ENCODE measurements at regions of chr9 and their contacts with region 1.

Region 1: GRCh38 chr9:97615439-97616072 is 17.6 kb downstream of the TSTD2 start:
- DNase-seq: no peak
- ATAC-seq: peak; percentile 73
- H3K4me3 ChIP-seq: no peak overlapping the region
- H3K27ac ChIP-seq: no peak overlapping the region
- H3K4me1 ChIP-seq: peaks cover 10% of the 10 kb centered on the region; the same call in 1 of the 2 replicates
- H3K27me3 ChIP-seq: no peaks in the 10 kb centered on the region
- CTCF ChIP-seq: peak; percentile 63 to 84 (median 80)
- EP300 ChIP-seq: no peak
- POLR2A ChIP-seq: no peak
- RAD21 ChIP-seq: peak; percentile 86

Region 2: GRCh38 chr9:97307091-97307490 is 308.5 kb before region 1 on chr9:
- CTCF ChIA-PET with region 1: no interaction called
- POLR2A ChIA-PET with region 1: no interaction called
- RAD21 ChIA-PET with region 1: no interaction called
- SMC1A ChIA-PET with region 1: no interaction called
- in situ Hi-C with region 1: no loop called
- intact Hi-C with region 1: no loop called
- DNase-seq: no peak
- ATAC-seq: no peak
- H3K4me3 ChIP-seq: no peak overlapping the region
- H3K27ac ChIP-seq: no peak overlapping the region
- H3K4me1 ChIP-seq: no peaks in the 10 kb centered on the region
- H3K27me3 ChIP-seq: no peaks in the 10 kb centered on the region; a peak in 1 of 4 replicates
- CTCF ChIP-seq: no peak
- EP300 ChIP-seq: no peak
- POLR2A ChIP-seq: no peak
- RAD21 ChIP-seq: no peak

Region 3: GRCh38 chr9:97398999-97399758 is 216.4 kb before region 1 on chr9:
- CTCF ChIA-PET with region 1: interaction called, 11 read pairs
- POLR2A ChIA-PET with region 1: no interaction called
- RAD21 ChIA-PET with region 1: interaction called, 3 read pairs
- SMC1A ChIA-PET with region 1: interaction called, 9 read pairs
- in situ Hi-C with region 1: no loop called
- intact Hi-C with region 1: no loop called
- DNase-seq: no peak
- ATAC-seq: peak; percentile 81
- H3K4me3 ChIP-seq: no peak overlapping the region
- H3K27ac ChIP-seq: no peak overlapping the region
- H3K4me1 ChIP-seq: peaks cover 6% of the 10 kb centered on the region
- H3K27me3 ChIP-seq: no peaks in the 10 kb centered on the region
- CTCF ChIP-seq: peak; percentile 86 to 100 (median 99)
- EP300 ChIP-seq: no peak
- POLR2A ChIP-seq: no peak
- RAD21 ChIP-seq: peak; percentile 82

Region 4: GRCh38 chr9:97440160-97440559 is 175.4 kb before region 1 on chr9:
- CTCF ChIA-PET with region 1: interaction called, 17 read pairs
- POLR2A ChIA-PET with region 1: no interaction called
- RAD21 ChIA-PET with region 1: interaction called, 3 read pairs
- SMC1A ChIA-PET with region 1: interaction called, 4 read pairs
- in situ Hi-C with region 1: no loop called
- intact Hi-C with region 1: no loop called
- DNase-seq: no peak
- ATAC-seq: no peak
- H3K4me3 ChIP-seq: no peak overlapping the region
- H3K27ac ChIP-seq: no peak overlapping the region
- H3K4me1 ChIP-seq: no peaks in the 10 kb centered on the region
- H3K27me3 ChIP-seq: no peaks in the 10 kb centered on the region
- CTCF ChIP-seq: no peak
- EP300 ChIP-seq: no peak
- POLR2A ChIP-seq: no peak
- RAD21 ChIP-seq: no peak

Region 5: DNA sequence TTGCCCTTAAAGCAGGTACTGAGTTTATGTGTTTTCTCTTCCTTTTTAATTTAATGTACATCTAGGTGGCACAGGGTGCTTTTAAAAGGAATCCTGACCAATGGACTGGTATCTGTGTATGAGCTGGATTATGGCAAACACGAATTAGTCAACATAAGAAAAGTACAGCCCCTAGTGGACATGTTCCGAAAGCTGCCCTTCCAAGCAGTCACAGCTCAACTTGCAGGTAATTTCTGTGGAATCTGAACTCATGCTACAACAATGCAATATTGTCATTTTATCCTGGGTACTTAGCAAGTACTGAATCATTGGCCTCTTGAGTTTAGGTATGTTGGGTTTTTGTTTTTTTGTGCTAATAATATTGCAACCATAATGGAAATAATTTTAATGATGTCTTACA is 128.4 kb before region 1 on chr9:
- CTCF ChIA-PET with region 1: interaction called, 13 read pairs
- POLR2A ChIA-PET with region 1: no interaction called
- RAD21 ChIA-PET with region 1: no interaction called
- SMC1A ChIA-PET with region 1: interaction called, 8 read pairs
- in situ Hi-C with region 1: no loop called
- intact Hi-C with region 1: no loop called
- DNase-seq: no peak
- ATAC-seq: peak; percentile 42; the same call in 2 of the 3 replicates
- H3K4me3 ChIP-seq: no peak overlapping the region
- H3K27ac ChIP-seq: no peak overlapping the region
- H3K4me1 ChIP-seq: peaks cover 5% of the 10 kb centered on the region; the same call in 1 of the 2 replicates
- H3K27me3 ChIP-seq: no peaks in the 10 kb centered on the region
- CTCF ChIP-seq: 0 out of 6 replicates have a peak, but pooled peaks of 1 of the 3 experiments have one; percentile 17
- EP300 ChIP-seq: no peak
- POLR2A ChIP-seq: no peak
- RAD21 ChIP-seq: no peak

Region 6: DNA sequence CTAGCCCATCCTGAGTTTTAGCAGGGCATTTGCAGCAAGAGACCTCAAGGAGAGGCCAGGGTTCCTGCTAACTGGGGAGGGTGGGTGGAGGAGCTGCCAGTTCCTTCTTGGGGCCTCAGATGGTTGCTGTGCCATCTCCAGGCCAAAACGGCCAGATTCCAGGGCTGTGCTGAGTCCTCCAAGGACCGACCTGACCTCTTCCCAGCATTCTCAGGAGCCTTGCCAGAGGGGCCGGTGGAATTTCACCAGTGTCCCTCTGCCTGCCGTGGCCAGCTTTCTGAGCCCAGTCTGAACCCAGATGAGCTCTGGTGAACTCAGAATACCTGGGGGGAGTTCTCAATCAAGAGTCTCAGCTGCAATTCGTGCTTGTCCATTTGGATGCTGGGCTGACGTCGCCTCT is 36.7 kb before region 1 on chr9:
- CTCF ChIA-PET with region 1: no interaction called
- POLR2A ChIA-PET with region 1: no interaction called
- RAD21 ChIA-PET with region 1: no interaction called
- SMC1A ChIA-PET with region 1: no interaction called
- in situ Hi-C with region 1: no loop called
- intact Hi-C with region 1: no loop called
- DNase-seq: no peak
- ATAC-seq: no peak
- H3K4me3 ChIP-seq: no peak overlapping the region
- H3K27ac ChIP-seq: no peak overlapping the region
- H3K4me1 ChIP-seq: no peaks in the 10 kb centered on the region
- H3K27me3 ChIP-seq: no peaks in the 10 kb centered on the region
- CTCF ChIP-seq: no peak
- EP300 ChIP-seq: no peak
- POLR2A ChIP-seq: no peak
- RAD21 ChIP-seq: no peak

Region 7: GRCh38 chr9:97632985-97633858 is 17.7 kb after region 1 on chr9 and contains the starts of genes NCBP1 and TSTD2:
- CTCF ChIA-PET with region 1: interaction called, 29 read pairs
- POLR2A ChIA-PET with region 1: interaction called, 6 read pairs
- RAD21 ChIA-PET with region 1: interaction called, 17 read pairs
- SMC1A ChIA-PET with region 1: interaction called, 16 read pairs
- in situ Hi-C with region 1: no loop called
- intact Hi-C with region 1: no loop called
- DNase-seq: peak; percentile 92
- ATAC-seq: peak; percentile 90
- H3K4me3 ChIP-seq: peak within 1 kb of the TSS; percentile 96
- H3K27ac ChIP-seq: peak within 1 kb of the TSS; percentile 93
- H3K4me1 ChIP-seq: peaks cover 5% of the 10 kb centered on the region
- H3K27me3 ChIP-seq: no peaks in the 10 kb centered on the region
- CTCF ChIP-seq: no peak
- EP300 ChIP-seq: peak in 1 of 2 experiments; percentile 25; a peak in 1 of 4 replicates
- POLR2A ChIP-seq: peak; percentile 95
- RAD21 ChIP-seq: no peak
- polyA plus RNA-seq, gene NCBP1: 14.7 to 21.5 TPM
- polyA plus RNA-seq, gene TSTD2: 5.0 to 5.3 TPM